Activated T-helper 1 cell treated with anti-CD3 and anti-CD28 coated beads, Interleukin-12 subunit alpha, Interleukin-12 subunit beta, Interleukin-2, Interleukin-4 antibody, amounts not matched to agents 30 ng/mL and 10 ng/mL and 1 ng/mL, durations not matched to agents 14 hours and 24 hours and 36 hours (primary cell): ENCODE measurements at regions of chr1 and their contacts with region 1.

Region 1: GRCh38 chr1:227728059-227728891 is 6.8 kb downstream of the JMJD4 start:
- DNase-seq: peak; percentile 37
- H3K4me3 Mint-ChIP-seq: peak overlapping the region; percentile 85
- H3K27ac Mint-ChIP-seq: peak overlapping the region; percentile 72
- H3K4me1 Mint-ChIP-seq: peaks cover 5% of the 10 kb centered on the region
- H3K27me3 Mint-ChIP-seq: peaks cover 7% of the 10 kb centered on the region

Region 2: GRCh38 chr1:227954163-227954850 is 226.0 kb after region 1 on chr1:
- intact Hi-C with region 1: loop called (anchors 1 kb)
- DNase-seq: no peak
- H3K4me3 Mint-ChIP-seq: no peak overlapping the region
- H3K27ac Mint-ChIP-seq: no peak overlapping the region
- H3K4me1 Mint-ChIP-seq: no peaks in the 10 kb centered on the region
- H3K27me3 Mint-ChIP-seq: peaks cover 28% of the 10 kb centered on the region